Right cardiac atrium (tissue), 5 donors: ENCODE measurements at regions of chr5 and their contacts with region 1.

Region 1: DNA sequence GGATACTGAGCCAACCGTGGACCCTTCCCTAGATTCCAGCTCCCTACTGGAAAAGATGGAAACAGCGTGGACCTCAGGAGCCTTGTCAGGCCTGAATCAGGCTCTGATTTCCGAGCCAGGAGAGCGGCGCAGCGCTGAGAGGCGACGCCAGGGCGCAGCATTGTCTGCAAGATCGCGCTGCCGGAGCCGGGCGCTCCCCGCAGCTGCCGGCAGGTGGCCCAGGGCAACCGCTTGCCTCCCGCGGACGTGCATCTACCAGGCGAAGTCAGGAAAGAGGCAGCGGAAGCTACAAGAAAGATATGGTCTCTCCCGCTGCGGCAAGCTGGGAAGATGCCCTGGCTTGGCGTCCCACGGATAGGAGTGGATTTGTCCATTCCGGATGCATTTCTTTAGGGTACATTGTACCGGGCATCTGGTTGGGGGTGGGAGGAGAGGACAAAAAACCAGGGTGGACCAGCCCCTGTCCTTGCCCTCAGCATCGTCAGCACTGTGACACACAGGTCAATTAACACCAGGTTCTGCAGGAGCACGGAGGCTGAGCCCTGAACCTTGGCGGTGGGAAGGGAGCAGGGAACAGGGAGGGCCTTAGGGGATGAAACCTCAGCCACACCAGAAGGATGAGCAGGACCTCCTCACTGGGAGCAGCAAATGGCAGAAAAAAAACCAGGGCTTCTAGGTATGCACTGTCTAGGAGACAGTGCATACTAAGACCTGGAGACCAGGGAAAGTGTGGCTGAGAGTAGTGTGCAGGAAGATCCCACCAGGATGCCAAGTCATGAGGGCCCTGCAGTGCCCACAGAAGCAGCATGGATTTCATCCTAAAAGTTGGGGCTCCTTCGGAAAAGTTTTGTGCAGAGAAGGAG is 55.9 kb downstream of the SFXN1 start:
- DNase-seq: peak; percentile 76 to 90 (median 90)
- ATAC-seq: peak; percentile 94
- H3K4me3 ChIP-seq: no peak overlapping the region
- H3K27ac ChIP-seq: no peak overlapping the region
- H3K4me1 ChIP-seq: no peaks in the 10 kb centered on the region
- H3K27me3 ChIP-seq: no peaks in the 10 kb centered on the region

Region 2: DNA sequence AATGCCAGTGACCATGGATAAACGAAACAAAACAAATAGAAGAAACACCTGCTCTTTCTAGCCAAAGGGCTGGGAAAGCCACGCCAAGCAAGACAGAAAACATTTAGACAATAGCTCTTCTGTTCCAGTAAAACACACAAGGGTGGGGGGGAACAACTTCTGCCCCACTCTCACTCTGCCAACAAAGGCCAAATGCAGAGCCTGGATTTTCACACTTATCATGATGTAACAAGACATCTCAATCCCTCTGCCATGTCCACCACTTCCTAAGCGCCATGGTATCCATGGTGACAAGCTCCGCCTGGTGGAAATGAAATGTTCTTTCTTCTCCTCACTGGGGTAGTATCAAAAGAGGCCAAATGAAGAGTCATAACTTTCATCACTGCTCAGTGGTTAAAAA is 151.0 kb before region 1 on chr5:
- intact Hi-C with region 1: no loop called
- DNase-seq: no peak
- ATAC-seq: no peak
- H3K4me3 ChIP-seq: no peak overlapping the region
- H3K27ac ChIP-seq: no peak overlapping the region
- H3K4me1 ChIP-seq: no peaks in the 10 kb centered on the region
- H3K27me3 ChIP-seq: no peaks in the 10 kb centered on the region

Region 3: DNA sequence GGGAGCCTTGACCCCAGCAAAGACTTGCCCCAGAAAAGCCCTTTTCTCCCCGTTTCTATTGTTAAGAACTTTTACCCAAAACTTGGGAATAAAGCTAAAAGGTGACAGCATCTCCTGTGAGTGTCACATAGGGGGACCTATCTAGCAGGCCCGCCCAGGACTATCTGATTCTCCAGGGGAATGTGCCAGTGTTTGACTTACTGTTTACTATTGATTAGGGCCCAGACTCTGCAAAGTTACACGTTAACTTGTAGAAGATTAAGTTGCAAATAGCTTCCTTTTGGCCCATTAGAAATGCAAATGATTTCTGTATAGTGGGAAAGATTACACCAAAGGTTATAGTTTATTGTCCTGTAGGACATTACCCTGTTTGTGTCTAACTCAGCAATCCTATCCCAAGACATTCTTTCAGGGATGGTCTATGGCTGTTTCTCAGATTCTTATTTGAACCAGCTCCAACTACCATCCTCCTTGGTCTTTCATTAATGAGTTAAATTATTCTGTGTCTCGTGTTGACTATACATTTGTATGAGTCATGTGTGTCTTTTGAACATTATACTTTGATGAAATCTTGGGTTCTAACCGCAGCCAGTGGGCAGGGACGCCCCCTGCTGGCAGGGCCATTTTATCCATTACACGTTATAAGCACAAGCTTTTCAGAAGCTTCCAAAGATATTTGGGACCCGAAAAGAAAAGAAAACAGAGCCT is 184.3 kb after region 1 on chr5:
- intact Hi-C with region 1: loop called (anchors 2 to 5 kb)
- DNase-seq: peak; percentile 37 to 79 (median 73)
- ATAC-seq: no peak
- H3K4me3 ChIP-seq: no peak overlapping the region
- H3K27ac ChIP-seq: no peak overlapping the region
- H3K4me1 ChIP-seq: no peaks in the 10 kb centered on the region
- H3K27me3 ChIP-seq: no peaks in the 10 kb centered on the region

Region 4: DNA sequence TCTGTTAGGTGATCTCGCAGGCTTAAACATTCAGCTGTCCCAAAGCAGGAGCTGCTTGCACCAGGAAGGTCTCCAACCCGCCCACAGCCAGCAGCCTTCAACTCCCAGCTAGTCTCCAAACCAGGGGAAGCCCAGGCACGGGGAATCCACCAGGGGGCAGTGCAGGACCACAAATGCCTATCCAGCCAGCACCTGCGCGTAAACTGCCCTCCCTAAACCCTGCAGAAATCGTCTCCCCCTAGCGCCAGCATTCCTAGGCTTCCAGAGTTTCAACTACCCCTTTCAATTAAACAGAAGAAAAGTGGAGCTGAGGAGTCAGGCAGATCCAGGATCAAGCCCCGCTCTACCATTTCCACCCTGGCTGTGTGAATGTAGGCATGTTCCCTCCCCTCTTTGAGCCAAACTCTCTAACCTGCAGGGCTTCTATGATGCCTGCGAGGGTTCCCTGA is 195.6 kb after region 1 on chr5:
- intact Hi-C with region 1: loop called in 1 of 4 experiments (anchors 5 kb)
- DNase-seq: peak; percentile 84 to 96 (median 95)
- ATAC-seq: peak; percentile 89 to 95
- H3K4me3 ChIP-seq: no peak overlapping the region
- H3K27ac ChIP-seq: no peak overlapping the region
- H3K4me1 ChIP-seq: no peaks in the 10 kb centered on the region
- H3K27me3 ChIP-seq: no peaks in the 10 kb centered on the region